Heart left ventricle (tissue), 16 donors: ENCODE measurements at regions of chr12 and their contacts with region 1.

Region 1: DNA sequence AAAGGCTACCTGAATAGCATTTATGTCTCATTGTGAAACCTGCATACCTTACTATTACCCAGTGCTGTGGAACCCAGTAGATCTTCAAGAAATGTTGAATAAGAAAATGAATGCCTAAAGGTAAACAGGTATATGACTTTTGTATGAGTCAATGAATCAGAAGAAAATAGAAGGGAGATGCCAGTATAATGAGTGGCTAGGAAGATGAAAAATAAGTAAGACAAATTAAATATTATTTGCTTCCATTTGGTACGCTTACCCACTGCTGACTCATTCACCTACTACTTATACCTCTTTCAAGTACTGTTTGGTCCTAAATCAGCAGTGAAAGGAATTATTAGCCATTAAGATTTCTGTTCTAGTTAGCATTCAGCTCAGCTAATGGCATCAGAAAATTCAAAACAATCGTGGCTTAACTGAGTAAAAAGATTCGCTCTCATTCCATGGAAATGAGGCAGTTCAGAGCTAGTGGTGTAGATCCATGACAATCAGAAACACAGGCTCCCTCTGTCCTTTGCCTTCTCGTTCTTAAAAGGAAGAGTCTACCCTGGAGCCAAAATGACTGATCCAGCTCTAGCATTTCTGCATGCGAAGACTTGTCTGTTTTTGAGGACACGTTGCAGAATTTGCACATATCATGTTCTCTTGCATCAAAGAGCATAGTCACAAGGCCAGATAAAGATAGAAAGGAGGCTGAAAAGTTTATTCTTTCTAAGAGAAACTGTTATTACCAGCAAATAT is 705.8 kb upstream of the USP15 start:
- DNase-seq: no peak
- ATAC-seq: no peak
- H3K4me3 ChIP-seq: no peak overlapping the region
- H3K27ac ChIP-seq: no peak overlapping the region
- H3K4me1 ChIP-seq: no peaks in the 10 kb centered on the region
- H3K27me3 ChIP-seq: no peaks in the 10 kb centered on the region
- CTCF ChIP-seq: no peak
- POLR2A ChIP-seq: no peak

Region 2: DNA sequence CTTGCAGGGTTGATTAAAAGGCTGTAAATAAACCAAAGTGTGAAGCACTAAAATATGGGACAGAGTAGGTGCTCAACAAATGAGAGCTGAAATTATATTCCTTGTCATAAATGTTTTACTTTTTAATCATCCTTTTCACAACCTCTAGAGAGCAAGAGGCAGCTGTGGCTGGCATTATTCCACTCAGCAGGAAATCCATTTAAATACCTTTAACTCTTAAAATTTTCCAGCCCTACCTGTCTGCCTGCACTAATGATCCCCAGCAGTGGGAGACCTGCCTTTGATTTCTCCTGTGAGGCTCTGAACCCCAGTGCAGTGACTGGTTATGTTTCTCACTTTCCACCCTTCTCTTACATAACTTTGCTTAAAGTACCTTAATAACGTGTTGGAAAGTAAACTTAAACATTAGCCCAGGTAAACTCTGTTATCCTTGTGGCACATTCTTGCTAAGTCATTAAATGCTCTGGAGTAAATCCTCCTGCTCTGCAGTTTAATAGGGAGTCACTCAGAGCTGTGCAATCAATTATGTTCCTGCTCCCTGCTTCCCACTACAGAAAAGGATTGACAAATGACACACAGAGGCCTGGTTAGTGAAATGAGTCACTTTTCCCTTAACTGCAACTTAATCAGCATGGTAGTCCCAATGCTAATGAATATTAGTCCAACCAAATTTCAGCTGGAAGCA is 49.9 kb before region 1 on chr12:
- intact Hi-C with region 1: loop called in 1 of 10 experiments (anchors 10 kb)
- DNase-seq: no peak
- ATAC-seq: no peak
- H3K4me3 ChIP-seq: no peak overlapping the region
- H3K27ac ChIP-seq: no peak overlapping the region
- H3K4me1 ChIP-seq: no peaks in the 10 kb centered on the region
- H3K27me3 ChIP-seq: no peaks in the 10 kb centered on the region
- CTCF ChIP-seq: no peak
- POLR2A ChIP-seq: no peak